ENCODE measurements at regions of chr1 and their contacts with region 1.

Region 1: GRCh38 chr1:225896937-225897549 is 8.1 kb upstream of the LEFTY1 start:
- DNase-seq: peak; percentile 46 to 96 (median 71)
- ATAC-seq: peak; percentile 90
- H3K4me3 ChIP-seq: peak overlapping the region; percentile 18 to 38
- H3K4me3 Mint-ChIP-seq: peak overlapping the region; percentile 74
- H3K27ac ChIP-seq: peak overlapping the region; percentile 72 to 80
- H3K27ac Mint-ChIP-seq: peak overlapping the region; percentile 99
- H3K4me1 ChIP-seq: peaks cover 42% of the 10 kb centered on the region
- H3K4me1 Mint-ChIP-seq: peaks cover 56% of the 10 kb centered on the region
- H3K27me3 ChIP-seq: no peaks in the 10 kb centered on the region
- H3K27me3 Mint-ChIP-seq: no peaks in the 10 kb centered on the region
- CTCF ChIP-seq: no peak

Region 2: DNA sequence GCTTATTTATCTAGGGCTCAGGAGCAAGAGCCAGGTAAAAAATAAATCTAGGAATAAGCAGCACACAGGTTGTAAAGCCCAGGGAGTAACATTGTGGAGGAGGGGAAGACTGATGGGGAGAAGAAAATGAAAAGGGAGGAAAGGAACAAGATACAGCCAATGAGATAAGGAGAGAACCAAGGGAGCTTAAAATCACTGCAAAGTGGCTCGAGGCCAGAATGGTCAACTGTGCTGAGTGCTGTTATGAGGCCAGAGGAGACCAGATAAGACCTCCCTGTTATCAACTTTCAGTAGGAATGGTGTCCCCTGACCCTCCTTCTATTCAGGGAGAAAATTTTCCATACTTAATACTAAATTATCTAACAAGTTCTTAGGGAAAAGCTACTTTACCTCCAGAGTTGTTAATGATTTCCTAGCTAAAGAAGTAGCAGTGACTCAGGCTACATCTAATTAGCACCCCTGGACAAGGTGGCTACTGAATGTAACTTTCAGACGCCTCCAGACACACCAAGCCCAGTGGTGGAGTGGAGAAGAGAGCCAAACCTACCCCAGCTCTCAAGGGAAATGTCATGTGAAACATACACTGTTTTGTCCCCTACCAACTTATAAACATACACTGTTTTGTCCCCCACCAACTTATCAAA is 269.6 kb before region 1 on chr1:
- CTCF ChIA-PET with region 1: no interaction called
- POLR2A ChIA-PET with region 1: no interaction called
- intact Hi-C with region 1: no loop called
- DNase-seq: no peak
- ATAC-seq: no peak
- H3K4me3 ChIP-seq: no peak overlapping the region
- H3K4me3 Mint-ChIP-seq: no peak overlapping the region
- H3K27ac ChIP-seq: no peak overlapping the region
- H3K27ac Mint-ChIP-seq: no peak overlapping the region
- H3K4me1 ChIP-seq: no peaks in the 10 kb centered on the region
- H3K4me1 Mint-ChIP-seq: no peaks in the 10 kb centered on the region
- H3K27me3 ChIP-seq: no peaks in the 10 kb centered on the region
- H3K27me3 Mint-ChIP-seq: peaks cover 9% of the 10 kb centered on the region
- CTCF ChIP-seq: no peak

Region 3: GRCh38 chr1:225825607-225826007 is 71.4 kb before region 1 on chr1:
- CTCF ChIA-PET with region 1: no interaction called
- POLR2A ChIA-PET with region 1: no interaction called
- intact Hi-C with region 1: no loop called
- DNase-seq: no peak
- ATAC-seq: no peak
- H3K4me3 ChIP-seq: no peak overlapping the region
- H3K4me3 Mint-ChIP-seq: no peak overlapping the region
- H3K27ac ChIP-seq: no peak overlapping the region
- H3K27ac Mint-ChIP-seq: no peak overlapping the region
- H3K4me1 ChIP-seq: no peaks in the 10 kb centered on the region
- H3K4me1 Mint-ChIP-seq: no peaks in the 10 kb centered on the region
- H3K27me3 ChIP-seq: no peaks in the 10 kb centered on the region
- H3K27me3 Mint-ChIP-seq: no peaks in the 10 kb centered on the region
- CTCF ChIP-seq: no peak

Region 4: DNA sequence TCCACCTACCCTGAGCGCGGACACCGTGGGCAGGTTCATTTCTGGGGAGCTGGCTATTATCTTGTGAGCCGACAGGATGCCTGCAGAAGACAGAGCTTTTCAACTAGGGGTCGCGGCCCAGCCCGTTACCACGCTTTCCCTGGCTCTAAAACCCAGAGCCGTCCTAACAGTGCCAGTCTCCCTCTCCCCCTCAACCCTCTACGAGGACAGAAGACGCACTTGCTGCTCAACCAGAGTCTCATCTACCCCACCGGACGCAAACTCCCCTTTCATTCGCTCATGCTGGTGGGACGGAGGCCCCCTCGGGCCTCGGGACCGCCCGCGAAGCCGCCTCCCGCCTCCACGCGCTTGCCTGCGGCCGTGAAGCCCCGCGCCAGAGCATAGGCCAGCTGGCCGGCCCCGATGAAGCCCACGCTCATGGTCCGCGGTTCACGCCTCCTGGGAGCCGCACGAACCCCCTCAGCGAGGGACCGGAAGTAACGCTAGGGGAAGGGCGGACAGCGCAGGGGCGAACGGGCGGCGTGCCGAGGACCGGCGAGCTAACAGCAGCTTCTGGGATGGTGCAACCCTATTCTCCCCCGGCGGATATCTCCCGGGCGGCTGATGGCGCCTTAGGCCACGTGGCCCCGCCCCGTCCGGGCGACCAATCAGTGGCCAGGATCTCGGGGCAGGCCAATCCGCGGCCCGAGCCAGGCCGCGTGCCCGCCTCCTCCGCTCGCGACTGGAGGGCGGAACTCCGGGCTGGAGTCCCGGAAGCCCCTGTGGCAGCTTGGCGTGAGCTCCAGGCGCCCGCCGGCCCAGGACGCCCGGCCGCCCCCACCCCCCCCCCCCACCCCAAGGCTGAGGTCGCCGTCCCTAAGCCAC is 26.9 kb after region 1 on chr1 and contains the start of gene PYCR2:
- CTCF ChIA-PET with region 1: no interaction called
- POLR2A ChIA-PET with region 1: interaction called, 17 read pairs
- intact Hi-C with region 1: loop called (anchors 1 to 2 kb)
- DNase-seq: peak; percentile 90 to 98 (median 92)
- ATAC-seq: peak; percentile 98
- H3K4me3 ChIP-seq: peak within 1 kb of the TSS; percentile 75 to 79
- H3K4me3 Mint-ChIP-seq: peak within 1 kb of the TSS; percentile 94
- H3K27ac ChIP-seq: peak within 1 kb of the TSS; percentile 75 to 91
- H3K27ac Mint-ChIP-seq: peak within 1 kb of the TSS; percentile 93
- H3K4me1 ChIP-seq: peaks cover 75% of the 10 kb centered on the region
- H3K4me1 Mint-ChIP-seq: peaks cover 63% of the 10 kb centered on the region
- H3K27me3 ChIP-seq: no peaks in the 10 kb centered on the region
- H3K27me3 Mint-ChIP-seq: no peaks in the 10 kb centered on the region
- CTCF ChIP-seq: no peak
- total RNA-seq, gene PYCR2: 27.3 to 30.6 TPM

Region 5: DNA sequence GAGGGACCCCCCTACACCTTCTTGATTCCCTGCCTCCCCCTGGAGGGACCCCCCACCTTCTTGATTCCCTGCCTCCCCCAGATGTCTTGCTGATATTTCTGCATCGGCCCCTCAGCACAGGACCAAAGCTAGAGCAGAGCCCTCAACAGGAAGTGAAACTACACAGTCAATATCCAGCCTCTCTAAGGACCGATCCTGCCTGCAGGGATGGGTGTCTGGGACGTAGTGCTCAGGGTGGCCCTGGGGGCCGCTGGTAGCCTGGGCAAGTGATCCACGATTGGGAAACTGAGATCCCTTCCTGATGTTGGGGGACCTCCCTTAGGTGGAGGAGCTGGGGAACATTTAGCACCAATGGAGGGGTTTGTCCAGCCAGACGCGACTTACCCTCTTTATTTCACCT is 47.9 kb after region 1 on chr1:
- CTCF ChIA-PET with region 1: no interaction called
- POLR2A ChIA-PET with region 1: no interaction called
- intact Hi-C with region 1: no loop called
- DNase-seq: peak in 1 of 9 experiments; percentile 35
- ATAC-seq: peak; percentile 52
- H3K4me3 ChIP-seq: no peak overlapping the region
- H3K4me3 Mint-ChIP-seq: peak overlapping the region; percentile 38
- H3K27ac ChIP-seq: no peak overlapping the region
- H3K27ac Mint-ChIP-seq: peak overlapping the region; percentile 42
- H3K4me1 ChIP-seq: peaks cover 13% of the 10 kb centered on the region
- H3K4me1 Mint-ChIP-seq: peaks cover 11% of the 10 kb centered on the region
- H3K27me3 ChIP-seq: no peaks in the 10 kb centered on the region
- H3K27me3 Mint-ChIP-seq: peaks cover 5% of the 10 kb centered on the region
- CTCF ChIP-seq: no peak